Activated B cell treated with CpG ODN at 0.5 μM for 24 hours (primary cell): ENCODE measurements at regions of chr10 and their contacts with region 1.

Region 1: DNA sequence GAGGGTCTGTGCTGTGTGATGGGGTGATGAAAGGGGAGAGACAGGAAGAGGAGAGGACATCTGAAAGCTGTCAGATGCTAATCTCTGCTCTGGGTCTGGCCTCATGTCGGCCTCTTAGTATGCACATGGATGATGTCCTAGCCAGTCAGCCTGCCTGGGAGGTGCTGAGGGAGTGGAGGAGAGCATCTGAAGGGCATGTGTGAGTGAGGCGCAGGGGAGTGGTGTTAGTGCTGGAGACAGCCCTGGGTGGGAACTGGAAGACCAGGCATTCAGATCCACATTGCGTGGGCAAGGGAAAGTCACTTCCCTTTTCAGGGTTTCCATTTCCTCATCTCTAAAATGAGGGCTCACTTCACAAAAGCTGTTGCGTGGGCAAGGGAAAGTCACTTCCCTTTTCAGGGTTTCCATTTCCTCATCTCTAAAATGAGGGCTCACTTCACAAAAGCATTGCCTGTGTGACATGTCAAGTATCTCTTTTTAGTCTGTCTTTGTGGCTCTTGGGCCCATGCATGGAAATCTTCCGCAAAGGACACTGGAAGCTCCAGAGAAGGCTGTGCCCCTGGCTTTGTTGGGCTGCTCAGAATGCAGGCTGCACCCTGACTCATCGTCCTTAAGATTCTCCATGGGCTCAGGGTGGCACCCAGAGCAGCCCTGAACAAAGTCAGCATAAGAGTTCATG is 10.0 kb downstream of the SFTPD start:
- DNase-seq: peak; percentile 69
- ATAC-seq: peak; percentile 85
- H3K4me3 Mint-ChIP-seq: peak overlapping the region; percentile 64
- H3K27ac Mint-ChIP-seq: peak overlapping the region; percentile 97
- H3K4me1 Mint-ChIP-seq: peaks cover 48% of the 10 kb centered on the region
- H3K27me3 Mint-ChIP-seq: no peaks in the 10 kb centered on the region
- CTCF ChIP-seq: no peak

Region 2: DNA sequence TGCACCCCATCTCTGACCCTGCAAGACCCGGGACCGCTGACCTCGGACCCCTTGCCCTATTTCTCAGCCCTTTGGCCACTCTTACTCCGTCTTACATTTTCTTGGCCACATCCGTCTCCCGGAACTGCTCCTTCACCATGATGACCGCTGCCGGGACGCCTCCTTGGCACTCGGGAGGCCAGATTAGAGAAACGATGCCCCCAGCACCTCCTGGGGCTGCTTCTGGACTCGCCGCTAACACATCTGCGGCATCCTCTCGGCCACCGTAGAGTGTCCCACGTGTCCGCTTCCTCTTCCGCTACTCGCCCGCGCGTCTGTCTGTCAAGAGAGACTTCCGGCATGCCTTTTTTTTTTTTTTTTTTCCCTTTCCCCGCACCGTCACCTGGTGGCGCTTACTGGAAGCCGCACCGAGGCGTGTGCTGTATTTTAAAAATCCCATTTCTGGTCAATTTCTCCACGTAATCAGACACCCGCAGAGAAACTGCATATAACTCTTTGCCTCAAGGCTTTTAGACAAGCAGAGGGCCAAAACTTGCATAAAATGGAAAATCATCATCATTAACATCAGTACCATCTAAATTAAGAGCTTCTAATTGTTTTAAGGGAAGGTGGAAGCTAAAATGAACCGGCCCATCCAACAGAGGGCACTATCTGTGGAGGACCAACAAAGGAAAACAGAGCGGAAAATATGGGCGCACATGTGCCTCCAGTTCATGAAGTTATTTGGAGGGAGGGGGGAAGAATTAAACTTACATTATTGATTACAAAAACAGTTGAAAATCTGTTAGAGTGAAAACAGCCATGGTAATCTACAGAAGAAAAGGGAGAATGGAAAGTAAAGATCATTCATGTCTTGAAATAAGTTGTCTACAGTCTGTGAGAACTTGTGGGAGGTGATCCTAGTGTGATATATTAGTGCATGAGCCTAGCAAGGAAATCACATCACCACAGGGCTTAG is 1909.3 kb before region 1 on chr10 and contains the start of gene POLR3A:
- CTCF ChIA-PET with region 1: no interaction called
- POLR2A ChIA-PET with region 1: no interaction called
- intact Hi-C with region 1: loop called (anchors 10 kb)
- DNase-seq: peak; percentile 85
- ATAC-seq: peak; percentile 57
- H3K4me3 Mint-ChIP-seq: peak within 1 kb of the TSS; percentile 99
- H3K27ac Mint-ChIP-seq: peak within 1 kb of the TSS; percentile 88
- H3K4me1 Mint-ChIP-seq: peaks cover 43% of the 10 kb centered on the region
- H3K27me3 Mint-ChIP-seq: no peaks in the 10 kb centered on the region
- CTCF ChIP-seq: no peak
- total RNA-seq, gene POLR3A: 17.0 and 20.3 TPM in 2 replicates

Region 3: DNA sequence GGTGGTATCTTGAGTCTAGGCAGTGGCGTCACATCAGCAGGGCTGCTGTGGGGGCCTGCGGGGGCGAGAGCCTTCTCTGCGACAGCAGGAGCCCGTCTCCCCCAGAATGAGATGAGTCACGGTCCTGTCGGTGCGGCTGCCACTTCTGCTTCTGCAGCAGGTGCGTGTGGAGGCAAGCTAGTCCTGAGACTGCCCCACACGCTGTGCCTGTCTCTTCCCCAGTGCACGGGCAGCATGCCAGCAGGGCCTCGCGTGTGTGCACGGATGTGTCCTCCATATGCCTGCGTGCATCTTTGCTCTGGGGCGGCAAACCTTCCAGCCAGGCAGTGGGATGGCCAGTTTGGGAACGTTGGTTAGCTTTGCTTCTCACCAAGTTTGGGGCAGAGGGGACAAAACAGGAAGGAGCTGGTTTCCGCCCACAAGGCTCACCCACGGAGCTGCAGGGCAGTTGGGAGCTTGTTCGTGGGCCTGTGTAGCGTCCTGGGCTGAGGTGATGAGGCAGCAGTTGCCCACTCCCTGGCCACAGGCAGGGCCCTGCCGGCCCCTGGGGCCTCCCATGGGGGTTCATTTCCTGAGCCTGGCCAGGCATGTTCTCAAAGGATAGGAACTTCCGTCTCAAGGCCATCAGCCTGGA is 652.4 kb before region 1 on chr10:
- CTCF ChIA-PET with region 1: no interaction called
- POLR2A ChIA-PET with region 1: no interaction called
- intact Hi-C with region 1: loop called (anchors 5 kb)
- DNase-seq: peak; percentile 81
- ATAC-seq: peak; percentile 89
- H3K4me3 Mint-ChIP-seq: peak overlapping the region; percentile 78
- H3K27ac Mint-ChIP-seq: peak overlapping the region; percentile 97
- H3K4me1 Mint-ChIP-seq: peaks cover 79% of the 10 kb centered on the region
- H3K27me3 Mint-ChIP-seq: no peaks in the 10 kb centered on the region
- CTCF ChIP-seq: no peak

Region 4: DNA sequence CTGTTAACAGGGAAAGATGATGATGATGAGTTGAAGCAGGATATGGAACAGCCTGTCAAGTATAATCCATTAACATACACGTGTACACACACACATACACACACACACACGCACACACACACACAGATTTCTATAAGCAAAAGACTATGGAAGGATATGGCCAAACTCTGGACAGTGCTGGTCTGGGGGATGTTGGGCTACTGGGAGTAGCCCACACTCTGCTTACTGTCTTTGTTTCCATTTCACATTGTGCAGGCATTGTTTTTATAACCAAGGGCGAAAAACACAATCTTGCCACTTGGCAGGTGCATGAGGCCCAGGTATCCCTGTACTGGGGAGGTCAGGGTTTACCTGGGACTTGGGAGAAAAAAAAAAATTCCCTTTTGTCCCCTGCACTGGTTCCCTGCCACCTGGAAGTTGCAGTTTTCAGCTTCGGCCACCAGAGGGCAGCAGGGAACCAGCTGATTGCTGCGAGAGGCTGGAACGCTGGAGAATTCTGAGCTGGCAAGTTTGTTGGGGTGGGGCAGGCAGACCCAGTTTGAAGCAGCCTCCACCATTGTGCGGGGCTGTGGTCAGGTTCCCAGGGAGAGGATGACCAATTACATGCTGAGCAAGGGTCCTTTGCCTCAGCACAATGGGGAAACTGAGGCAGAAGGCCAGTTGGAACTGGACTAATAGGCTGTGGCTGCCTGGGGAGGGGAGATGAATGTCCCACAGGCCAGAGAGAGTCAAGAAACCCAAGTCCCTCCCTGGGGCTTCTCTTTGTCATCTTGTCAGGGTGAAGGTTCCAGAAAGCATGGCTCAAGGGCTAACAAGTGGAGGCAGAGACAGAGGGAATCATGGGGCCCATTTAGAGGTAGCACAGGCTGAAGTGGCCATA is 564.3 kb before region 1 on chr10:
- CTCF ChIA-PET with region 1: no interaction called
- POLR2A ChIA-PET with region 1: no interaction called
- intact Hi-C with region 1: no loop called
- DNase-seq: peak; percentile 63
- ATAC-seq: peak; percentile 82
- H3K4me3 Mint-ChIP-seq: no peak overlapping the region
- H3K27ac Mint-ChIP-seq: no peak overlapping the region
- H3K4me1 Mint-ChIP-seq: peaks cover 3% of the 10 kb centered on the region
- H3K27me3 Mint-ChIP-seq: no peaks in the 10 kb centered on the region
- CTCF ChIP-seq: peak; percentile 73

Region 5: GRCh38 chr10:79981450-79982361 is 42.8 kb after region 1 on chr10:
- CTCF ChIA-PET with region 1: no interaction called
- POLR2A ChIA-PET with region 1: no interaction called
- intact Hi-C with region 1: loop called (anchors 2 kb)
- DNase-seq: peak; percentile 20
- ATAC-seq: peak; percentile 28
- H3K4me3 Mint-ChIP-seq: peak overlapping the region; percentile 64
- H3K27ac Mint-ChIP-seq: no peak overlapping the region
- H3K4me1 Mint-ChIP-seq: peaks cover 11% of the 10 kb centered on the region
- H3K27me3 Mint-ChIP-seq: peaks cover 60% of the 10 kb centered on the region
- CTCF ChIP-seq: no peak

Region 6: DNA sequence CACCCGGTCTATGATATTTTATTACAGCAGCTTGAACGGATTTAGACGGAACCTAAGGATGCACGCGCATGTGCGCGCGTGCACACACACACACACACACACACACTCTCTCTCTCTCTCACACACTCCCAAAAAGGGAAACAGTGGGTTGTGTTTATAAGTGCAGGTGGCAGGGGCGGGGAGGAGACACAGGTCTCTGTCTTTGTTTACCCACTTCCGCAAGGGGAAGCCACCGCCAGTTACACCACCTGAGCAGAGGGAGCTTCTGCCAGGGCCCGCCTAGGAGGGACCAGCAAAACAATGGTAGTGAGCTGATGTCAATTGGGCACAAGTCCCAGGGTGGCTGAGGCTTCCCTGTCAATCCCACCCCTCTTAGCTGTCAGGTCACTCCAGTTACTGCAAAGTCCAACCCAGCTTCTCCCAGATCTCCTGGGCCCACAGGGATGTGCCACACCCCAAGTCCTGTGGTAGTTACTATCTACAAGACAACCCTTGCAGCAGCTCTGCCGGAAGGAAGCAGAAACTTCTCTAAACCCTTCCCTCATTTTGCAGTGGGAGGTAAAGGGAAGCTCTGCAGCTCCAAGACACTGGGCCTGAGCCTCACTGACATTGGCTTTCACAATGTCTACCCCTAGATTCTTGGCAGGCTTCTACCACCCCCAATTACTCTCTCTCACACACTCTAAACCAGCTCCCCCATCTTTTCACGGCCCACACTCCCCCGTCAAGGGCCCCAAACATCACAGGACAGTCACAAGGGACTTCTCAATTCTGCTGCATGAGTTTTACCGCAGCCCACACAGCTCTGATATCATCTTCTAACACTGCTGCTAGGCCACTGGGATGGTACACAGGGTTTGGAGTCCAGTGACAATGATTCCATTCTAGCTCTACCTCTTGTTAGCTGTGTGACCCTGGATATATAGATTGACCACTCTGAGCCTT is 248.9 kb after region 1 on chr10:
- CTCF ChIA-PET with region 1: no interaction called
- POLR2A ChIA-PET with region 1: no interaction called
- intact Hi-C with region 1: loop called (anchors 5 kb)
- DNase-seq: peak; percentile 57
- ATAC-seq: peak; percentile 91
- H3K4me3 Mint-ChIP-seq: peak overlapping the region; percentile 68
- H3K27ac Mint-ChIP-seq: peak overlapping the region; percentile 91
- H3K4me1 Mint-ChIP-seq: peaks cover 82% of the 10 kb centered on the region
- H3K27me3 Mint-ChIP-seq: no peaks in the 10 kb centered on the region
- CTCF ChIP-seq: no peak

Region 7: DNA sequence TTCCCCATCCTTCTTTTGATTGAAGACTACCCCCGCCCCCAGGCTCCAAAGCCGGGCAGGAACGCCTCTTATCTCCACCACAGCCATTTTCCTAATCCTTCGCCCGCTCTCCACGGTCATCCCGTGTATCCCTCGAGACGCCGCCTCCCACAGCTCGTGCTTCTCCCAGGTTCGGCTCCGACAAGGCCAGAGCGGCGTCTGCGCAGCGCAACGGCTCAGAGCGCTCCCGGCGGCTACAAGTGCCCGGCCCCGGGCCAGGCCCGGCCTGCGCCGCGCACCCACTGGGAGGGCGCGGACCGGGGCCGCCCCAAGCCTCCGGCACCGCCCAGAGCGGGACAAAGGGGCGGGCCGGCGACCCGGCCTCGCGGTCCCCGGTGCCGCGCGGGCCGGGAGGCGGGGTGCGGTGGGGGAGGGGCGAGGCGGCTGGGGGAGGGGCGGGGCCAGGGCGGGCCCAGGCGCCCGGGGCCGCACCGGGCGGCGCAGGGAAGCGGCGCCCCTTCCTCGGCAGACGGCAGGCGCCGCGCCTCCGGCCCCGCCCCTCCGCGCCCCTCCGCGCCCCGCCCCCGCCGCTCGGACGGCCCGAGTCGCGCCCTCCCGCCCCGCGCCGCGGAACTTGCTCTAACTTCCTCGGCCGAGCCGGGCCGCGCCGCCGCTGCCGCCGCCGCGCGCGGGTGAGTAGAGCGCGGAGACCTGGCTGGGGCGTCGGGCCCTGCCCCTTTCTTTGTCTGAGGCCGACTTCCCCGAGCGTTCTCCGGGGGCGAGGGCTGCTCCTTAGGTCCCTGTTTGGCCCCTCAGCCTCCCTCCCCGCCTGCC is 515.0 kb after region 1 on chr10 and contains the start of gene TSPAN14:
- CTCF ChIA-PET with region 1: no interaction called
- POLR2A ChIA-PET with region 1: no interaction called
- intact Hi-C with region 1: loop called (anchors 10 kb)
- DNase-seq: peak; percentile 73
- ATAC-seq: peak; percentile 77
- H3K4me3 Mint-ChIP-seq: peak within 1 kb of the TSS; percentile 95
- H3K27ac Mint-ChIP-seq: peak within 1 kb of the TSS; percentile 89
- H3K4me1 Mint-ChIP-seq: peaks cover 50% of the 10 kb centered on the region
- H3K27me3 Mint-ChIP-seq: no peaks in the 10 kb centered on the region
- CTCF ChIP-seq: no peak
- total RNA-seq, gene TSPAN14: 18.9 and 20.7 TPM in 2 replicates

Region 8: DNA sequence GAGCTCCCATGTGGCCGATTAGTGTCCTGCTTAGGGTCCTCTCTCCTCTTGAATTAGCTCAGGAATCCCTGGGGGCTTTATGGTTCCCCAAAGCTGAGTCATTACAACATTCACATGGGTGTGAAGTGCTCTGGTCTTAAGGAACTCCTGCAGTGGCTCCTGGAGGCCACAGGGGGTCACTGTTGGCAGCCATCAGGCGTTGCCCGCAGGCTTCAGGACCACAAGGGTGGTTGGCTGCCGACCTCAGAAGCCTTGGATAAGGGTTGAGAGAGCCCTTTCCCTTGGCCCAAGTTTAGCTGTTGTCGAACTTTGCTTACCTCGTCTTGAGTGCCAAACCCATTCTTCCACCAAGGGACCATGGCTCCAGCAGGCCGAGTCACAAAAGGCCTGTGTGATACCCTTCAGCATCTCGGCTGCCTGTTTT is 660.6 kb after region 1 on chr10:
- CTCF ChIA-PET with region 1: no interaction called
- POLR2A ChIA-PET with region 1: no interaction called
- intact Hi-C with region 1: loop called (anchors 10 kb)
- DNase-seq: no peak
- ATAC-seq: peak; percentile 76
- H3K4me3 Mint-ChIP-seq: no peak overlapping the region
- H3K27ac Mint-ChIP-seq: no peak overlapping the region
- H3K4me1 Mint-ChIP-seq: peaks cover 25% of the 10 kb centered on the region
- H3K27me3 Mint-ChIP-seq: no peaks in the 10 kb centered on the region
- CTCF ChIP-seq: no peak